OCI-LY7 (cell line): ENCODE measurements at regions of chr3 and their contacts with region 1.

Region 1: DNA sequence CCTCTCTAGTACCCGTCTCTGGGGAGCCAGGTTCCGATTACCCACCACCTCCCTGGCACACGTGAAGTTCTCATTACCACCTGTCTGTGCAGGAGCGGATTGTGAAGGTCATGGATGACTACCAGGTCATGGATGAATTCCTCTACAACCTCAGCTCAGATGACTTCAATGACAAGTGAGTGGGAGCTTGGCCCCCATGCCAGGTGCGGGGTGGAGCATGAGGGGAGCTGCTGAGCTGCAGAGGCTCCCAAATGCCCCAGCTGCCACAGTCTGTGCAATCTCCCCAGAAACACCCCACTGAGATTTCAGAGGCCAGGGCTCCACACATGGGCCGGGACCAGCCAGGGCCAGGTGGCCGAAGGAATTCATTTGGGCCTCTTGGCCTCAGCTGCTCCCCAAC is 34.3 kb downstream of the DNAH1 start:
- DNase-seq: peak; percentile 75
- H3K4me3 ChIP-seq: no peak overlapping the region
- H3K27ac ChIP-seq: peak overlapping the region; percentile 11
- H3K4me1 ChIP-seq: peaks cover 24% of the 10 kb centered on the region
- CTCF ChIP-seq: no peak

Region 2: DNA sequence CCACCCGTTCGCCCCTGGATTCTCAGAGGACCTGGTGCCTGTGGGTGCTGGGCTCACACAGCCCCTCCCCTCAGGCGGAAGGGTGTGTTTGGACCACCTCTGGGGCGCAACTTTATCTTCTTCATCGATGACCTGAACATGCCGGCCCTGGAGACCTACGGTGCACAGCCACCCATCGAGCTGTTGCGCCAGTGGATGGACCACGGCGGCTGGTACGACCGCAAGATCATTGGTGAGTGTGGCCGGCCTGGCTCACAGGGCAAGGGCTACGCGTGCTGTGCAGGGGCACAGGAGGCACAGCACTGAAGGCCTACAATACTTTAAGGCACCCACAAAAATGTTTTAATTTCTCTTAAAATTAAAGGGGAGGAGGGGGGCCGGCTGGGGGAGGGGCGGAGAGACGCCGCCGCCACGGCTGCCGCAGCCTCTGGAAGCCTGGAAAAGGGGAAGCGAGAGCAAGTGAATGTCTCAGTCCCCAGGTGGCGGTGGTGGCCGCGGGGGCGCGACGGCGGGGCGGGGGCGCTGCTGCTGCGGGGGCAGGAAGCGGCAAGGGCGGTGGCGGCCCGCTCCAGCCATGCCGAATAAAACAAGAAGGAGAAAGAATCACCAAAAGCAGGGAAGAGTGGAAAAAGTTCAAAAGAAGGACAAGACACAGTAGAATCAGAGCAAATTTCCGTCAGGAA is 22.5 kb after region 1 on chr3:
- CTCF ChIA-PET with region 1: no interaction called
- POLR2A ChIA-PET with region 1: no interaction called
- intact Hi-C with region 1: loop called (anchors 2 kb)
- DNase-seq: peak; percentile 84
- H3K4me3 ChIP-seq: peak overlapping the region; percentile 49
- H3K27ac ChIP-seq: peak overlapping the region; percentile 39
- H3K4me1 ChIP-seq: peaks cover 33% of the 10 kb centered on the region
- CTCF ChIP-seq: peak; percentile 60

Region 3: GRCh38 chr3:52385157-52385556 is 34.7 kb after region 1 on chr3:
- CTCF ChIA-PET with region 1: interaction called, 3 read pairs
- POLR2A ChIA-PET with region 1: no interaction called
- intact Hi-C with region 1: loop called (anchors 1 kb)
- DNase-seq: peak; percentile 82
- H3K4me3 ChIP-seq: no peak overlapping the region
- H3K27ac ChIP-seq: no peak overlapping the region
- H3K4me1 ChIP-seq: no peaks in the 10 kb centered on the region
- CTCF ChIP-seq: peak; percentile 90